Right cardiac atrium (tissue), 5 donors: ENCODE measurements at regions of chr3 and their contacts with region 1.

Region 1: DNA sequence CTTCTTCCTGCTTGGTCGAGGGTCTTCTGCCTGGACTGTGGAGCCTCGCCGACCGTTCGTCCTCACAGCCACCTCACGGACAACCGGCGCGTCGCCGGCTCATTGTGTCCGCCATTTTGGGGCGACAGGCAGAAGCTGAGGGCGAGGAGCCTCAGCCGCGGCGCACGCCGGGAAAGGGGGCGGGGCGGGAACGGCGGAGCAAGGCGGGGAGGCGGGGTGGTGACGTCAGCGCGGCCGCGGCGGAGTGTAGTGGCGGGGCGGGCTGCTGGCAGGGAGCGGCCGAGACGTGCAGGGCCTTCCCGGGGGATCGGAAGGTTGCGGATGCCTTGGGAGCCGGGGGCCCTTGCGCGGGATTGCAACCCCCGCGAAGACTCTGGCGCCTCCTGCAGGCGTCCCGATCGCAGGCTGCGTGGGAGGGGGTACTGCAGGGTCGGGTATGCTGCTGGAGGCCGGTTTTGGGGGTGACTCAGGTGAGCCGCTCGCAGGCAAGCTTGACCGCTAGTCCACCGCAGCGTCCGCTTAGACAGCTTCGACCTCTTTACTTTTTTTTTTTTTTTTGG is at the start of gene WDR82:
- DNase-seq: peak; percentile 98 to 100 (median 99)
- ATAC-seq: peak; percentile 95 to 97
- H3K4me3 ChIP-seq: peak within 1 kb of the TSS; percentile 84
- H3K27ac ChIP-seq: peak within 1 kb of the TSS; percentile 95
- H3K4me1 ChIP-seq: peaks cover 8% of the 10 kb centered on the region
- H3K27me3 ChIP-seq: no peaks in the 10 kb centered on the region
- total RNA-seq, gene WDR82: 61.0 to 65.5 (median 63.2) TPM

Region 2: GRCh38 chr3:51879937-51880336 is 398.7 kb before region 1 on chr3:
- intact Hi-C with region 1: no loop called
- DNase-seq: no peak
- ATAC-seq: no peak
- H3K4me3 ChIP-seq: no peak overlapping the region
- H3K27ac ChIP-seq: no peak overlapping the region
- H3K4me1 ChIP-seq: no peaks in the 10 kb centered on the region
- H3K27me3 ChIP-seq: no peaks in the 10 kb centered on the region

Region 3: GRCh38 chr3:52231502-52232293 is 46.9 kb before region 1 on chr3:
- intact Hi-C with region 1: loop called in 1 of 4 experiments (anchors 5 kb)
- DNase-seq: peak; percentile 77 to 91 (median 89)
- ATAC-seq: peak; percentile 12 to 38
- H3K4me3 ChIP-seq: no peak overlapping the region
- H3K27ac ChIP-seq: no peak overlapping the region
- H3K4me1 ChIP-seq: peaks cover 10% of the 10 kb centered on the region
- H3K27me3 ChIP-seq: no peaks in the 10 kb centered on the region

Region 4: DNA sequence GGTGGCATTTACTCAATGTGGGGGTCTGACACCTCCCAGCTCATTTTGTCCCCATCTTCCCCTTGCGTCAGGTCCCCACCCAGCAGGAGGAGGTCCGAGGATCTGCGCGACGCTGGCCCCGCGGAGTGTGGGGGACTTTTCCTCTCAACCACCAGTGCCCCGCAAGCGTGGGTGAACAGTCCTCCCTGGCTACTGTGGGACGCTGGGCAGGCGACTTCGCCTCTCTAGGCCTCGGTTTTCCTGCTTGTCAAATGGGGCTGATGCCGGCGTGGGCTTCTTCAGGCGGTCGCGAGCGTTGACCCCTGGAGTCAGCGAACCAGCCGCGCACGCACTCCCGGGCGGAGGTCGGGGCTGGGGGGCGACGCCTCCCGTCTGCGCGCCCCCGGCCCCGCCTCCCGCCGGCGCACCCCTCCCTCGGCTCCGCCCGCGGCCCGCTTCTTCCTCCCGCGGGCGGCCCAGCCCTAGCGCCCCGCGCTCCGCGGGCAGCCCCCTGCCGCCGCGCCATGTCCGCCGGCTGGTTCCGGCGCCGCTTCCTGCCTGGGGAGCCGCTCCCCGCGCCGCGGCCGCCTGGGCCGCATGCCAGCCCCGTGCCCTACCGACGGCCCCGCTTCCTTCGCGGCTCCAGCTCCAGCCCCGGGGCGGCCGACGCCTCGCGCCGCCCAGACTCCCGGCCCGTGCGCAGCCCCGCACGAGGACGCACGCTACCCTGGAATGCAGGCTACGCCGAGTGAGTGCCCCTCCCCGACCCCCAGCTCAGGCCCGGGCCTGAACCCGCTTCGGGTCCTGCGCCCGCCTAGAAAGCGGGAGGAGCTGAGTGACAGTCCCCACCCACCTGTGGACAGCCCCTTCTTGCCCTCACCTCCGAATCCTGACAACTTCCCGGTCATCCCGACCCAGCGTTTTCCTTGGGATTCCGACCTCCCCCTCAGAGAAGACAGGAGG is 33.0 kb before region 1 on chr3 and contains the start of gene PPM1M:
- intact Hi-C with region 1: loop called in 1 of 4 experiments (anchors 5 kb)
- DNase-seq: peak; percentile 64 to 86 (median 84)
- ATAC-seq: peak; percentile 61 to 68
- H3K4me3 ChIP-seq: peak within 1 kb of the TSS; percentile 62
- H3K27ac ChIP-seq: peak within 1 kb of the TSS; percentile 67
- H3K4me1 ChIP-seq: no peaks in the 10 kb centered on the region
- H3K27me3 ChIP-seq: no peaks in the 10 kb centered on the region
- total RNA-seq, gene PPM1M: 11.3 to 16.3 (median 14.7) TPM